ENCODE measurements at regions of chr14 and their contacts with region 1.

Region 1: DNA sequence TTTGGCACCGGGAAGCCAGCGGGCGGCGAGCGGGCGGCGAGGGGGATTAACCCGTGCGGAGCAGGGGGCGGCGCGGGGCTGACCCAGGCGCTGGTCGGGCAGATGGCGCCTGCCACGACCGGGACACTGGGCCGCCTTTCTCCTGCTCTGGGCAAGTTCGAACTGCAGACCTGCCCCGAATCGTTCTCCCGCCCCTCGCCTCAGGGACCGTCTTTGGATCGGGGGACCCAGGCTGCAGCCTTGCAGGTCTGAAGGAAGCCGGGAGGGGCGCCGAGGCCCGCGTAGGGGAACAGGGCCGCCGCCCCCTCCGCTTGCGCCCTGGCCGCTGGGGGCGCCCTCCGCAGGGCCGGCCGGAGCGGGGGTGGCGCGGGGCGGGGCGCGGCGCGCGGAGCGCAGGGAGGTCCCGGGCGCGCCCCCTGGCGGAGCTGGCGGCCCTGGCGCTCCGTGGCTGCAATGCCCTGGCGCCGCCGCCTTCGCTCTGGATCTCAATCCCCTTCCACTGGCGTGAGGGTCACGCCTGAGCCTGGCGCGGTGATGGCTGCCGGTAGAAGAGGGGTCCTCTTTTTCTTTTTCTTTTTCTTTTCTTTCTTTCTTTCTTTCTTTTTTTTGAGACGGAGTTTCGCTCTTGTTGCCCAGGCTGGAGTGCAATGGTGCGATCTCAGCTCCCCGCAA is 449 bp upstream of the LTBP2 start:
- DNase-seq: no peak
- ATAC-seq: peak; percentile 87
- H3K4me3 ChIP-seq: peak overlapping the region; percentile 63
- H3K27ac ChIP-seq: no peak overlapping the region
- H3K4me1 ChIP-seq: peaks cover 15% of the 10 kb centered on the region
- H3K27me3 ChIP-seq: peaks cover 0 to 1% of the 10 kb centered on the region in 2 experiments; a peak in 2 of 4 replicates
- CTCF ChIP-seq: peak; percentile 59 to 65 (median 64); a peak in 5 of 6 replicates
- EP300 ChIP-seq: no peak
- POLR2A ChIP-seq: no peak
- RAD21 ChIP-seq: peak; percentile 40

Region 2: GRCh38 chr14:74595006-74595735 is 17.3 kb before region 1 on chr14:
- CTCF ChIA-PET with region 1: interaction called, 14 read pairs
- POLR2A ChIA-PET with region 1: interaction called, 6 read pairs
- RAD21 ChIA-PET with region 1: interaction called, 12 read pairs
- SMC1A ChIA-PET with region 1: interaction called, 8 read pairs
- in situ Hi-C with region 1: no loop called
- intact Hi-C with region 1: no loop called
- DNase-seq: no peak
- ATAC-seq: no peak
- H3K4me3 ChIP-seq: no peak overlapping the region
- H3K27ac ChIP-seq: no peak overlapping the region
- H3K4me1 ChIP-seq: peaks cover 15% of the 10 kb centered on the region
- H3K27me3 ChIP-seq: no peaks in the 10 kb centered on the region
- CTCF ChIP-seq: no peak
- EP300 ChIP-seq: no peak
- POLR2A ChIP-seq: no peak
- RAD21 ChIP-seq: no peak

Region 3: DNA sequence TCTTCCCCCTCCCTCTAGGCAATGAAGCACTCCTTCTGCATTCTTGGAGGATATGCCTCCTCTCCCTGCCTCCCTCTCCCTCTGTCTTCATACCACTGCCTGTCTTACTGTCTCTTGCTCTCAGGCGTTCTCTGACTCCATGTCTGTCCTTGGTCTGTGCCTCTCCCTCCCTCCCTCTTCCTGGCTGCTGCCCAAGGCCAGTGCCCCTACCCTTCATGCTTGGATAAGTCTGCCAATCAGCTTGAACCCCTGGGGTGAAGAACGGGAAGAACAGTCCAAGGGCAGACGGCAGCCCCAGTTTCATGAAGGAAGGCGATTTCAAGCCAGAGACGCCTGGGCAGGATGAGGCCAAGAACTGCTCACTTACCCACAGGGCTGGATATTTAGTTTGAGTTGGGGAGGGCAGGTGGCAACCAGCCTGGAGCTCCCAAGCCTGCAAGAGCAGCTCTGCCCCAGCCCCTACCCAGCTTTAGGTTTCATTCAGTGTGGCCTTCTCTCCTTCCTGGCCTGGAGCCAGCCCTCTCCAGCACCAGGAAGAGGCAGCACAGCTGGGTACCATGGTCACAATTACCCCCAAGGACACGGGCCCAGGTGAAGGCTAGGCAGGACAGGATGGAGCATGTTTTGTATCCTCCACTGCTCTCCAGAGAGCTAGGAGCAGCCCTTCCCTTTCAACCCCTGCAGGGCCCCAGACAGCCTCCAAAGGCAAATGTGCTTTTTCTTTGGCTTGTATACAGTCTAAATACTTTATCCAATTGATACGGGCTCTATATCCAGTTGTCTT is 35.4 kb after region 1 on chr14:
- CTCF ChIA-PET with region 1: interaction called, 14 read pairs
- POLR2A ChIA-PET with region 1: no interaction called
- RAD21 ChIA-PET with region 1: interaction called, 4 read pairs
- SMC1A ChIA-PET with region 1: no interaction called
- in situ Hi-C with region 1: no loop called
- intact Hi-C with region 1: loop called (anchors 5 kb)
- DNase-seq: no peak
- ATAC-seq: peak; percentile 23
- H3K4me3 ChIP-seq: no peak overlapping the region
- H3K27ac ChIP-seq: no peak overlapping the region
- H3K4me1 ChIP-seq: no peaks in the 10 kb centered on the region
- H3K27me3 ChIP-seq: no peaks in the 10 kb centered on the region
- CTCF ChIP-seq: no peak
- EP300 ChIP-seq: no peak
- POLR2A ChIP-seq: no peak
- RAD21 ChIP-seq: no peak

Region 4: GRCh38 chr14:74793506-74794168 is 181.2 kb after region 1 on chr14:
- CTCF ChIA-PET with region 1: interaction called, 8 read pairs
- POLR2A ChIA-PET with region 1: no interaction called
- RAD21 ChIA-PET with region 1: no interaction called
- SMC1A ChIA-PET with region 1: interaction called, 3 read pairs
- in situ Hi-C with region 1: no loop called
- intact Hi-C with region 1: loop called (anchors 1 kb)
- DNase-seq: no peak
- ATAC-seq: no peak
- H3K4me3 ChIP-seq: no peak overlapping the region
- H3K27ac ChIP-seq: no peak overlapping the region
- H3K4me1 ChIP-seq: no peaks in the 10 kb centered on the region
- H3K27me3 ChIP-seq: no peaks in the 10 kb centered on the region
- CTCF ChIP-seq: 0 out of 6 replicates have a peak, but pooled peaks of 2 of the 3 experiments have one; percentile 16 to 22
- EP300 ChIP-seq: no peak
- POLR2A ChIP-seq: no peak
- RAD21 ChIP-seq: no peak

Region 5: DNA sequence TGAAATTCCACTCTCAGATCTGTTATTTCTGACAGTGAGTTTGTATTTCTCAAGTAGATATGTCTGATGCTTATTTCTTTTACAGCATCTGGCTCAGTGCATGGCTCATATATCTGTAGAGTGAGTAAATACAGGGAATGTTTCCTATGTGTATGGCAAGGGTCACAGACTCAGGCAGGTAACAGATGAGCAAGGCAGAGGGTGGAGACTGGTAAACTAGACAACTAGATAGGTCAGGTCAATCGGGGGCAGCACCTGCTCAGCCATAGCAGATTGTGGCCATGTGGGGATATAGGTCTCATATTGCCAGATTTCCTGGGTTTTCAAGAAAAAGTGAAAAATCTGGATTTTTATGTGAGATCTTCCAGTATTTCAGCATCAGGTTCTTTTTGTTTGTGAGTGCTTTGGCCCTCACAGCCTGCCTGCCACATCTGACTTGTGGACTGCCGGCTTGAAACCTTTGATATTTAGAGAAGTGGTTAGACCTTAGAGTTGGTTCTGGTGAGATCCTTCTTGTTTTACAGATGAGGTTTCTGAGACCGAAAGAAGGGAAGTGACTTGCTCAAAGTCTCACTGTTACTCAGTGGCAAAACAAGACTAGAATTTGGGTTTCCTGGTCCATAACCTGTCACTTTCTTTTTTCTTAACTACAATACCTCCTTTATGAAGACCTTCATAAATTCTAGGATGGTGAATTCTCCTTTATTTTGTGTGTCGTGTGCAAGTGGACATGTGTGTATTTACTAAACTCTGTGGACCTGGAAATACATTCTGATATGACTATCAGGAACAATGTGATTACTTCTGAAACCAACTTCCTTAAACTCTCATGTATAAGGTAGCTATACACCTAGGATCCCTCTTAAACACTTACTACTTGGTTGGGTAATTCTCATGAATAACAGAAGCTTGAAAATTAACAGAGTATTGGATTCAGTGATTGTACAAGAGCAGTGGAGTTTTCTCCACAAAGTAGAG is 229.0 kb after region 1 on chr14:
- CTCF ChIA-PET with region 1: interaction called, 13 read pairs
- POLR2A ChIA-PET with region 1: interaction called, 9 read pairs
- RAD21 ChIA-PET with region 1: interaction called, 3 read pairs
- SMC1A ChIA-PET with region 1: interaction called, 6 read pairs
- in situ Hi-C with region 1: no loop called
- intact Hi-C with region 1: no loop called
- DNase-seq: peak; percentile 77
- ATAC-seq: peak; percentile 95
- H3K4me3 ChIP-seq: peak overlapping the region; percentile 25; the same call in 1 of the 2 replicates
- H3K27ac ChIP-seq: peak overlapping the region; percentile 86
- H3K4me1 ChIP-seq: peaks cover 44% of the 10 kb centered on the region
- H3K27me3 ChIP-seq: no peaks in the 10 kb centered on the region
- CTCF ChIP-seq: no peak
- EP300 ChIP-seq: peak; percentile 47 to 74; a peak in 3 of 4 replicates
- POLR2A ChIP-seq: no peak
- RAD21 ChIP-seq: no peak

Region 6: GRCh38 chr14:75230140-75231045 is 617.9 kb after region 1 on chr14:
- CTCF ChIA-PET with region 1: no interaction called
- POLR2A ChIA-PET with region 1: no interaction called
- RAD21 ChIA-PET with region 1: no interaction called
- SMC1A ChIA-PET with region 1: no interaction called
- in situ Hi-C with region 1: no loop called
- intact Hi-C with region 1: no loop called
- DNase-seq: peak; percentile 74
- ATAC-seq: peak; percentile 81
- H3K4me3 ChIP-seq: no peak overlapping the region
- H3K27ac ChIP-seq: peak overlapping the region; percentile 34; the same call in 1 of the 2 replicates
- H3K4me1 ChIP-seq: peaks cover 37% of the 10 kb centered on the region
- H3K27me3 ChIP-seq: no peaks in the 10 kb centered on the region
- CTCF ChIP-seq: peak in 1 of 3 experiments; percentile 19; a peak in 1 of 6 replicates
- EP300 ChIP-seq: 0 out of 4 replicates have a peak, but pooled peaks of 1 of the 2 experiments have one; percentile 23
- POLR2A ChIP-seq: no peak
- RAD21 ChIP-seq: no peak

Measured in GM12878 (cell line).